H1 (cell line): ENCODE measurements at regions of chr2 and their contacts with region 1.

Region 1: DNA sequence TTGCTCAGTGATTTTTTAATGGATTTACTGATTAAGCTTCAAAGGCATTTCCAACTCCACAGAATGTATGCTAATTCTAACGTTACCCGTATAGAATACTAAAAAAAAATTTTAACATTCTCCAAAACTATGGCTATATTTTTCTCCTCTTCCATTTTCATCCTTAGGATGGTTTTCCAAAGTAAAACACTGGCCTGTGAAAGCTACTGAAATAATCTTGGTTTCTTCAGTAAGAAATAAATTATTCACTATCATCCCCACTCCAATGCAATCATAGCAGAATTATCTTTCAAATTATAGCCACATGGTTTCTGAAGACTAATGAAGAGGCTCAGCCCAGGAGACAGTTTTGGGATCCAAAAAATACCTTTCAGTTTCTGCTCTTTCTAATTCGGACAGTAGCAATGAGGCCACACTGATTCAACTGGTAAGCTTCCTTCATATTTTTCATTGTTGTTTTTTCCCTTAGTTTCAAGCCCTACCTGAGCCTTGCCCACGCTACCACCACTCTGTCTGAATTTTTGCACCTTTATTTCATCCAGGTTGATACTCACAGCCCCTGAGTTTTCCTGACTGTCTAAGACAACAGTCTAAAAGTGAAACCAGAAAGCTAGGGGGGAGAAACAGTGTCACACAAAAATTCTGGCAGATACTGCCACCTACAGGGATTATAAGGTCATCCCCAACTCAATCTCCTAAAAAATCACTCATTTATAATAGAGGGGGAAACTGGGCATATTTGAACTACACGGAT is 887.9 kb downstream of the NRXN1 start:
- DNase-seq: no peak
- H3K4me3 ChIP-seq: no peak overlapping the region
- H3K27ac ChIP-seq: no peak overlapping the region
- H3K4me1 ChIP-seq: peaks cover 0 to 3% (median 1%) of the 10 kb centered on the region in 4 experiments; a peak in 2 of 7 replicates
- H3K27me3 ChIP-seq: no peaks in the 10 kb centered on the region
- CTCF ChIP-seq: peak in 2 of 3 experiments; percentile 46 to 51; a peak in 2 of 4 replicates
- EP300 ChIP-seq: no peak
- POLR2A ChIP-seq: no peak
- RAD21 ChIP-seq: peak; percentile 79 to 86

Region 2: DNA sequence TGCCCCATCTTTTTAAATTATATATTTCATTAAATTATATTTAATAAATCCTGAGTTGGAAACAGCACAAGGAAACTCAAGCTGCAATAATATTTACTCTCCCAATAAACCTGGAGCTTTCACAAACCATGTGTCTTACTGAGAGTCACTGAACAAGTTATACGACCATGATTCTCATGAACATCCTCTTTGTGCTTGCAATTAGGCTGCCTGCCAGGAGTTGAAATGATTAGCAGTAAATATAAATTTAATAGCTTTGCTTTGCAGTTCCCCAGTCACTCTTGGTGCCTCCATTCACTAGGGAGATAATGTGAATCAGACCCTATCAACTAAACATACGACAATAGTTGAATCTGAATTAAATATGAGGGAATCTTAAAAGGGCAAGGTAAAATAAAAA is 17.2 kb before region 1 on chr2:
- CTCF ChIA-PET with region 1: interaction called, 11 read pairs
- POLR2A ChIA-PET with region 1: no interaction called
- DNase-seq: no peak
- H3K4me3 ChIP-seq: no peak overlapping the region
- H3K27ac ChIP-seq: no peak overlapping the region
- H3K4me1 ChIP-seq: no peaks in the 10 kb centered on the region
- H3K27me3 ChIP-seq: no peaks in the 10 kb centered on the region
- CTCF ChIP-seq: no peak
- EP300 ChIP-seq: no peak
- POLR2A ChIP-seq: no peak
- RAD21 ChIP-seq: no peak